Caco-2 (cell line): ENCODE measurements at regions of chr3 and their contacts with region 1.

Region 1: GRCh38 chr3:80606073-80606472 is 838.3 kb upstream of the ROBO1 start:
- DNase-seq: peak in 1 of 2 experiments; percentile 29
- H3K4me3 ChIP-seq: no peak overlapping the region
- H3K4me3 Mint-ChIP-seq: no peak overlapping the region
- H3K27ac Mint-ChIP-seq: no peak overlapping the region
- H3K4me1 ChIP-seq: peaks cover 2% of the 10 kb centered on the region
- H3K4me1 Mint-ChIP-seq: no peaks in the 10 kb centered on the region
- H3K27me3 ChIP-seq: no peaks in the 10 kb centered on the region
- H3K27me3 Mint-ChIP-seq: no peaks in the 10 kb centered on the region
- CTCF ChIP-seq: peak; percentile 7 to 17

Region 2: GRCh38 chr3:80159990-80160506 is 446.0 kb before region 1 on chr3:
- CTCF ChIA-PET with region 1: no interaction called
- POLR2A ChIA-PET with region 1: no interaction called
- intact Hi-C with region 1: no loop called
- DNase-seq: no peak
- H3K4me3 ChIP-seq: no peak overlapping the region
- H3K4me3 Mint-ChIP-seq: no peak overlapping the region
- H3K27ac Mint-ChIP-seq: no peak overlapping the region
- H3K4me1 ChIP-seq: no peaks in the 10 kb centered on the region
- H3K4me1 Mint-ChIP-seq: no peaks in the 10 kb centered on the region
- H3K27me3 ChIP-seq: no peaks in the 10 kb centered on the region
- H3K27me3 Mint-ChIP-seq: no peaks in the 10 kb centered on the region
- CTCF ChIP-seq: no peak

Region 3: DNA sequence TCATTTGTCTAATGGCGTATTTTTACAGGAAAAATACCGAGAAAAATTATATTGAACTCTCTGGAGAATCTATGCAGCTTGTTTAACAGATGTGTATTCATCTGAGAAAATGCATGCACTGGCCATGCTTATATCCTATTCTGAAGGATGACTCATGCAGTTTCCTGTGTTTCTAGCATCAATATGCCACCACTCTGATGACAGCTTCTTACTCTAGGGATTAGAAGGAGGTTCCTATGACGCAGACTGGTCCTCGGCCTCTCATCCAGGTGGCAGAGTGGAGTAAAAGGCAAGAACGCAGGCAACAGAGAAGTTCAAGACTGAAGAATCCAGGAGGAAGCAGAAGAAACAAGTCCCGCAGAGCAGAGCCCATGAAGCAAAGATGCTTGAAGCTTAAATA is 71.7 kb after region 1 on chr3:
- CTCF ChIA-PET with region 1: interaction called, 3 read pairs
- POLR2A ChIA-PET with region 1: no interaction called
- intact Hi-C with region 1: loop called (anchors 1 kb)
- DNase-seq: no peak
- H3K4me3 ChIP-seq: no peak overlapping the region
- H3K4me3 Mint-ChIP-seq: no peak overlapping the region
- H3K27ac Mint-ChIP-seq: no peak overlapping the region
- H3K4me1 ChIP-seq: no peaks in the 10 kb centered on the region
- H3K4me1 Mint-ChIP-seq: no peaks in the 10 kb centered on the region
- H3K27me3 ChIP-seq: no peaks in the 10 kb centered on the region
- H3K27me3 Mint-ChIP-seq: no peaks in the 10 kb centered on the region
- CTCF ChIP-seq: no peak

Region 4: GRCh38 chr3:80688814-80689213 is 82.7 kb after region 1 on chr3:
- CTCF ChIA-PET with region 1: no interaction called
- POLR2A ChIA-PET with region 1: no interaction called
- intact Hi-C with region 1: loop called (anchors 1 kb)
- DNase-seq: peak in 1 of 2 experiments; percentile 19
- H3K4me3 ChIP-seq: no peak overlapping the region
- H3K4me3 Mint-ChIP-seq: no peak overlapping the region
- H3K27ac Mint-ChIP-seq: no peak overlapping the region
- H3K4me1 ChIP-seq: no peaks in the 10 kb centered on the region
- H3K4me1 Mint-ChIP-seq: no peaks in the 10 kb centered on the region
- H3K27me3 ChIP-seq: no peaks in the 10 kb centered on the region
- H3K27me3 Mint-ChIP-seq: no peaks in the 10 kb centered on the region
- CTCF ChIP-seq: peak; percentile 30 to 48

Region 5: GRCh38 chr3:80785470-80785869 is 179.4 kb after region 1 on chr3:
- CTCF ChIA-PET with region 1: no interaction called
- POLR2A ChIA-PET with region 1: no interaction called
- intact Hi-C with region 1: loop called (anchors 5 kb)
- DNase-seq: peak; percentile 40 to 41
- H3K4me3 ChIP-seq: no peak overlapping the region
- H3K4me3 Mint-ChIP-seq: no peak overlapping the region
- H3K27ac Mint-ChIP-seq: no peak overlapping the region
- H3K4me1 ChIP-seq: no peaks in the 10 kb centered on the region
- H3K4me1 Mint-ChIP-seq: no peaks in the 10 kb centered on the region
- H3K27me3 ChIP-seq: no peaks in the 10 kb centered on the region
- H3K27me3 Mint-ChIP-seq: no peaks in the 10 kb centered on the region
- CTCF ChIP-seq: peak; percentile 51 to 64

Region 6: GRCh38 chr3:81173514-81173913 is 567.4 kb after region 1 on chr3:
- CTCF ChIA-PET with region 1: no interaction called
- POLR2A ChIA-PET with region 1: no interaction called
- intact Hi-C with region 1: loop called (anchors 1 kb)
- DNase-seq: peak in 1 of 2 experiments; percentile 11
- H3K4me3 ChIP-seq: no peak overlapping the region
- H3K4me3 Mint-ChIP-seq: no peak overlapping the region
- H3K27ac Mint-ChIP-seq: no peak overlapping the region
- H3K4me1 ChIP-seq: peaks cover 9% of the 10 kb centered on the region; the same call in 1 of the 2 replicates
- H3K4me1 Mint-ChIP-seq: peaks cover 9% of the 10 kb centered on the region
- H3K27me3 ChIP-seq: no peaks in the 10 kb centered on the region
- H3K27me3 Mint-ChIP-seq: no peaks in the 10 kb centered on the region
- CTCF ChIP-seq: peak in 1 of 2 experiments; percentile 13